OCI-LY7 (cell line): ENCODE measurements at regions of chr1 and their contacts with region 1.

Region 1: GRCh38 chr1:229495782-229496181 is 12.4 kb downstream of the NUP133 start:
- DNase-seq: no peak
- H3K4me3 ChIP-seq: no peak overlapping the region
- H3K27ac ChIP-seq: no peak overlapping the region
- H3K4me1 ChIP-seq: no peaks in the 10 kb centered on the region
- CTCF ChIP-seq: no peak

Region 2: GRCh38 chr1:229507951-229508822 is 12.4 kb after region 1 on chr1 and contains the start of gene NUP133:
- CTCF ChIA-PET with region 1: interaction called, 3 read pairs
- POLR2A ChIA-PET with region 1: interaction called, 12 read pairs
- intact Hi-C with region 1: no loop called
- DNase-seq: peak; percentile 98
- H3K4me3 ChIP-seq: peak within 1 kb of the TSS; percentile 93
- H3K27ac ChIP-seq: peak within 1 kb of the TSS; percentile 69
- H3K4me1 ChIP-seq: peaks cover 24% of the 10 kb centered on the region
- CTCF ChIP-seq: no peak
- total RNA-seq, gene NUP133: 33.0 and 33.3 TPM in 2 replicates

Region 3: DNA sequence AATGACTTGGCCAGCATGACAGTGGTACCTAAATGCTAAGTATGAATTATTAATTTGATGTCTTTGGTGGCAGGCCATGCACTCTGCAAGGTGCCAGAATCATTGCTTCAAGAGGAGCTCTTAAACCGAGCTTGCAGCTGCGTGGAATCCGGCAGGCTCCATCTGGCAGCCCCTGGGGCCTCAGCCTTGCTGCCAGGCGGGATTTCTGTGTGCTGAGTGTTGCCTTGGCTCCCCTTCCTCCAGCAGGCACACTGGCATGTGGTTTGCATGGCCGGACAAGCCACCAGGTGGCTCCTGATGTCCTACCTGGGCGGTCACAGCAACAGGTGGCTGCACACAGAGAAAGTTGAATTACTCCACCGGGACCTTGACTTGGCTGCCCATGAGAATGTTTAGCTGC is 285.7 kb after region 1 on chr1:
- CTCF ChIA-PET with region 1: no interaction called
- POLR2A ChIA-PET with region 1: no interaction called
- intact Hi-C with region 1: no loop called
- DNase-seq: peak; percentile 17
- H3K4me3 ChIP-seq: no peak overlapping the region
- H3K27ac ChIP-seq: no peak overlapping the region
- H3K4me1 ChIP-seq: no peaks in the 10 kb centered on the region
- CTCF ChIP-seq: 0 out of 2 replicates have a peak, but pooled peaks have one; percentile 14